ENCODE measurements at regions of chr1 and their contacts with region 1.

Region 1: DNA sequence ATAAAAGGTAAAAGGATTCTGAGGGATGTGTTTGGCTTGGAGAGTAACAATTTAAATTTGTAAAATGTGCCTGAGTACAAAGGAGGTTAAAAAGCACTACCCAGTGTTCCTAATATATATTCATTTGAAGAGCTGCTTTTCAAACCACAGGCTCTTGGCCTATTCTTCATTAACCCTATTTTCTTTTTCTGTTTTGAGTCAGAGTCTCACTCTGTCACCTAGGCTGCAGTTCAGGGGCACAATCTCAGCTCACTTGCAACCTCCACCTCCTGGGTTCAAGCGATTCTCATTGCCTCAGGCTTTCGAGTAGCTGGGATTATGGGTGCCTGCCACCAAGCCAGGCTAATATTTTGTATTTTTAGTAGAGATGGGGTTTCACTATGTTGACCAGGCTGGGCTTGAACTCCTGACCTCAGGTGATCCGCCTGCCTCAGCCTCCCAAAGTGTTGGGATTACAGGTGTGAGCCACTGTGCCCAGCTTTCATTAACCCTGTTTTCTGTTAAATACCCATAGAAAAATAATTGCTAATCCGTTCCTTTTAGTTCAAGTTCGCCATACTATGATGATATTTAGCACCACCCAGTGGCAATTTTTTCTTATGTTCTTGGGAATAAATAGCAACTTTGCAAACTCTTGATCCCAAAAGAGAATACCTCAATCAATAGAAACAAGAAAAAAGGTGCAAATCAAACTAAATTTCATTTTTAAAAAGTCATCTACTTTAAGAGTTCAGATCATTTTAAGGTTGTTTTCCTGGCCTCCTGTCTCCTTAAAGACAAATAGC is 30.5 kb downstream of the ZBTB8OS start:
- DNase-seq: peak; percentile 52
- CTCF ChIP-seq: no peak

Region 2: DNA sequence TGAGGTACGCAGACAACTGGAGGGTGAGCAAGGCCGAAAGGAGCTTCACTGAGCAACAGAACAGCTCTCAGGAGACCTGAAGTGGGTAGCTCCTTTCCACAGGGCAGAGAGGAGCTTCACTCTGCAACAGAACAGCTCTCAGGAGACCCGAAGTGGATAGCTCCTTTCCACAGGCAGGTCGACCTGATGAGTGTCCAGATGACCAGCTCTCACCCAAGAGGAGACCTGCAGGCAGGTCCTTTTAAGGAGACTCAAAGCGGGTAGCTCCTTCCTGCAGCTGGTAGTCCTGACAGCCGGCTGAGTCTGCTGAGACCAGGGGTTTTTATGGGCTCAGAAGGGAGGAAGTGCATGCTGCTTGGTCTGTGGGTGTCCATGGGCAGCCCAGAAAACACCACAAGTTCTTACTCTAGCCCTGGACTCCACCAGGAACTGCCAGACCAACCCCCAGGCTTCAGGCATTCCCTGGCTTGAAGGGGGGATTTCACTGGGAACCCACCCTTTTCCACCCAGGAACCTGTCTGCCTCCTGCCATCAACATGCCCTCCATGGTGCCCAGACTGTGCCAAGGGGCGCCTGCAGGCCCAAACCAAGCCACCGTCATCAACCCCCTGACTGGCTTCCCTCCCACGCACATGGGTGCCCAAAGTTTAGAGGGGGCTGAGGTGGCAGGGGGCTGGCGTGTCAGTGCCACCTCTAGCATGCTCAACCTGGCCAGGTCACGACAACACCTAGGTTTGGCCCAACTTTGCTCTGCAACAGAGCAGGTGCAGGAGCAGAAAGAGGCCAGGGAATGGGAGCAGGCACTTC is 13.1 kb before region 1 on chr1:
- CTCF ChIA-PET with region 1: interaction called, 15 read pairs
- POLR2A ChIA-PET with region 1: interaction called, 4 read pairs
- DNase-seq: no peak
- CTCF ChIP-seq: no peak

Measured in GM10248 (cell line).